WTC11 (cell line): ENCODE measurements at regions of chr5 and their contacts with region 1.

Region 1: DNA sequence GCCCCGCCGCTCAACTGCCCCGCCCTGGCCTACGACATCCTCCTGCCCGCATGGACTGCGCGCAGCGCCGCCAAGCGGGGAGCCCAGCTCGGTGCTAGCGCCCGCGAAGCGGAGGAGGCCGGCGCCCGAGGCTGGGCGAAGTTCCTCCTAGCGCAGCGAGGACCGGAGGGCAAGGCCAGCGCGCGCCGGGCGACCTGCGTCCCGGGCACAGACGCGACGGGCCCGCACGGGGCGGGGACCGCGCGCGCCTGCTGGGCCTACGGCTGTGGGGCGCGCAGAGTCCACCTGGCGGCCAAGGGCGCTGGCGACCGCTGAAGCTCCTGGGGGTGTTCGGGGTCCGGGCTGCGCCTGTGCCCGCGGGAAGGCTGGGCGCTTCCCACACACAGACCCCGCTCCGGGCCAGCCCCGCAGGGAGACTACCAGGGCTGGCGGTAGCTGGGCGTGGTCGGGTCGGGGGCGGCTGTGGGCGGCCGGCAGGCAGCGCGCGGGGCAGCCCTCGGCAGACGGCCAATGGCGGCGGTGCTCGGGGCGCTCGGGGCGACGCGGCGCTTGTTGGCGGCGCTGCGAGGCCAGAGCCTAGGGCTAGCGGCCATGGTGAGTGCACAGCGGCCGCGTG is at the start of gene PCBD2:
- DNase-seq: peak; percentile 96
- ATAC-seq: peak; percentile 90
- H3K4me3 Mint-ChIP-seq: peak within 1 kb of the TSS; percentile 92
- H3K27ac Mint-ChIP-seq: peak within 1 kb of the TSS; percentile 95
- H3K4me1 Mint-ChIP-seq: peaks cover 7% of the 10 kb centered on the region
- H3K27me3 Mint-ChIP-seq: no peaks in the 10 kb centered on the region
- CTCF ChIP-seq: peak; percentile 82
- total RNA-seq, gene PCBD2: 9.9 to 12.8 TPM (median 9.9 TPM) in 3 replicates

Region 2: GRCh38 chr5:134724872-134725271 is 179.9 kb before region 1 on chr5:
- CTCF ChIA-PET with region 1: no interaction called
- POLR2A ChIA-PET with region 1: interaction called, 12 read pairs
- DNase-seq: no peak
- ATAC-seq: no peak
- H3K4me3 Mint-ChIP-seq: no peak overlapping the region
- H3K27ac Mint-ChIP-seq: no peak overlapping the region
- H3K4me1 Mint-ChIP-seq: no peaks in the 10 kb centered on the region
- H3K27me3 Mint-ChIP-seq: no peaks in the 10 kb centered on the region
- CTCF ChIP-seq: no peak

Region 3: DNA sequence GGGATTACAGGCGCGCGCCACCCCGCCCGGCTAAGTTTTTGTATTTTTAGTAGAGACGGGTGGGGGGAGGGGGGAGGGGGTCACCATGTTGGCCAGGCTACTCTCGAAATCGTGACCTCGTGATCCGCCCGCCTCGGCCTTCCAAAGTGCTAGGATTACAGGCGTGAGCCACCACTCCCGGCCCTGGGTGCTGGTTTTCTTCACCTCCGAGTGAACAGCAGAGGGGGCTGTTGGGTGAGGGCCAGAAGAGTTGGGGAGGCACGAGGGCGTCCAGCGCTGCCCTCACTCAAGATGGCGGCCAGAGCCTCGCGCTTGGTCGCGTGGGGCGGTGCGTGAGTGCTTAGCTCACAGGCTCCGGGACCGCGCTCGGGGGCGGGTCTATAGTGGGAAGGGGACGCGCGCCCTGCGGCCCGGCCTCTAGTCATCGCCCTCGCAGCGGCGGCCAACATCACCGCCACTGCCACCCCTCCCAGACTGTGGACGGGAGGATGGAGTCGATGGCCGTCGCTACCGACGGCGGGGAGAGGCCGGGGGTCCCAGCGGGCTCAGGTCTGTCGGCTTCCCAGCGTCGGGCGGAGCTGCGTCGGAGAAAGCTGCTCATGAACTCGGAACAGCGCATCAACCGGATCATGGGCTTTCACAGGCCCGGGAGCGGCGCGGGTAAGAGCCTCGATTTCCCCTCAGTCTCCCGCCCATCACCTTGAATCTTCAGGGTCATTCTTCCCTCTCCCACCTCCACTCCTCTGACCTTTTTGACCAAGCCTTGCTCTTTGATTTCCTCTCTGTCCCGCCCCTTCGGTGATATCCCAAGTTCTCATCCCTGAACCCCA is 166.4 kb before region 1 on chr5 and contains the start of gene CAMLG:
- CTCF ChIA-PET with region 1: interaction called, 30 read pairs
- POLR2A ChIA-PET with region 1: interaction called, 6 read pairs
- DNase-seq: peak; percentile 98
- ATAC-seq: peak; percentile 87
- H3K4me3 Mint-ChIP-seq: peak within 1 kb of the TSS; percentile 95
- H3K27ac Mint-ChIP-seq: peak within 1 kb of the TSS; percentile 95
- H3K4me1 Mint-ChIP-seq: peaks cover 8% of the 10 kb centered on the region
- H3K27me3 Mint-ChIP-seq: no peaks in the 10 kb centered on the region
- CTCF ChIP-seq: peak; percentile 43; the same call in 1 of the 2 replicates
- total RNA-seq, gene CAMLG: 39.7 to 43.9 TPM (median 42.1 TPM) in 3 replicates

Region 4: DNA sequence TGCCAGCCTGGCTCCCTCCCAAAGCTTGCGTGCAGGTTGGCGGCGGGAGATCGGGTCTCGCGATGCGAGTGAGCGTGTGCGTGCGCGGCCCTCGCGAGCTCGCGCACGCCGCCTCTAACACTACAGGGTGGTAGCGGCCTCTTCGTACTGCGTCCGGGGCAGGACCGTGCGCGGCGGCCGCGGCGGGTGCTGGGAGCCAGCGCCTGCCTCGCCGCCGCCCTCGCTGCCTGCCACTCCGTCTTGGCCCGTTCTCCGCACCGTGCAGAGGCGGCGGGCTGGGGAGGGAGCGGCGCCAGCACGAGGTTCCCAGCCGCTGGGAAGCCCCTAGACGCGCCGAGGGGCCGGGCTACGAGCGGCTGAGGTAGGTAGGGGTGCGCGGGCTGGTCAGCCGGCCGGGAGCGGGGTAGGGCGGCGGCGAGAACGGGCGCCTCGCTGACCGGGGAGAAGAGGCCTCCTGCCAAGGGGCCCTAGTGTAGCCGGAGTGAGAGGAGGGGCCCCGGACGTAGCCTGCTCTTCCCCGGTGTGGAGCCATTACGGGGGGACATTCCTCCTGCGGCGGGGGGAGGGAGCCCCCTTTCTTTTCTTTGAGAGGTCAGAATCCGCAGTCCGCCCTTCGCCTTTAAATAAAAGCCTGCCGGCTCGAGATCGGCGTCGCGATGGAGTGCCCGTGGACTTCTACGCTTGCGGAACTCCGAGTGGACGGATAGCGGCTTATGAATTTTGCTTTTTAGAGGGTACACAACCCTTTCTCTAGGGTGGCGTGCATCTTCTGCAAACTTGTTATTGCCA is 58.7 kb before region 1 on chr5 and contains the start of gene C5orf24:
- CTCF ChIA-PET with region 1: interaction called, 14 read pairs
- POLR2A ChIA-PET with region 1: interaction called, 4 read pairs
- DNase-seq: peak; percentile 76
- ATAC-seq: peak; percentile 85
- H3K4me3 Mint-ChIP-seq: peak within 1 kb of the TSS; percentile 87
- H3K27ac Mint-ChIP-seq: peak within 1 kb of the TSS; percentile 65
- H3K4me1 Mint-ChIP-seq: peaks cover 14% of the 10 kb centered on the region
- H3K27me3 Mint-ChIP-seq: no peaks in the 10 kb centered on the region
- CTCF ChIP-seq: no peak
- total RNA-seq, gene C5orf24: 15.7 to 21.2 TPM (median 20.6 TPM) in 3 replicates

Region 5: DNA sequence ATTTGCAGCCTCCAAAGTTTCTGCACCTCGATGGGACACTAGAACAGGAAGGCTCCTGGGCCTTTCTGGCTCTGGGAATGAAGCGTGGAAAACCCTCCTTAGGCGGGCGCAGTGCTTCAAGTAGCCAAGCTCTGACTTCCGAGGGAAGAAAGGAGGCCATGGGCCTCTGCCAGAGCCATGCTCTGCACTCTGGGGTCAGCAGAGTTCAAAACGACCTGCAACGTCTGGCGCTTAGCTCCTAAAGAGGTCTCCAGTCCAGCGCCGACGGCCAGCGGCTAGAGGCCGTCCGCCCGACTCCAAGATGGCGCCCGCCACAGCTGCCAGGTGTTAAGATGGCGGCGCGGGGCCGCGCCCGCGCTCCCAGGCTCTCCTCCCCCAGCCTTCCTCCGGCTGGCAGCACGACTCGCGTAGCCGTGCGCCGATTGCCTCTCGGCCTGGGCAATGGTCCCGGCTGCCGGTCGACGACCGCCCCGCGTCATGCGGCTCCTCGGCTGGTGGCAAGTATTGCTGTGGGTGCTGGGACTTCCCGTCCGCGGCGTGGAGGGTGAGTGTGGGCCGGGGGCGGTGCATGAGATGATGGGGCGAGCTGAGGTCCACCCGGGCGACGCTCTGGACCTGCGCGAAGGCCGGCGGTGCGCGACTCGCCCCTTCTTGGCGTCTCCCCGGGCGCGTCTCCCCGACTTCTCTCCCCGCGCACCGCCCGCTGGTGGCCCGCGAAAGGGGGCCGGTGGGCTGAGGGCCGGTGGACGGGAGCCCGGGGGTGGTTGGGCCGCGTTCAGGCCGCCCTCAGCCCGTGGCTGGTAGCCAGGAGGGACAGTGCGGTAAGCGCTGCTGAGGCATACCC is 30.5 kb before region 1 on chr5 and contains the start of gene TXNDC15:
- CTCF ChIA-PET with region 1: interaction called, 30 read pairs
- POLR2A ChIA-PET with region 1: interaction called, 20 read pairs
- DNase-seq: peak; percentile 87
- ATAC-seq: peak; percentile 89
- H3K4me3 Mint-ChIP-seq: peak within 1 kb of the TSS; percentile 88
- H3K27ac Mint-ChIP-seq: peak within 1 kb of the TSS; percentile 53
- H3K4me1 Mint-ChIP-seq: peaks cover 15% of the 10 kb centered on the region
- H3K27me3 Mint-ChIP-seq: no peaks in the 10 kb centered on the region; the same call in 1 of the 2 replicates
- CTCF ChIP-seq: no peak
- total RNA-seq, gene TXNDC15: 26.1 to 28.7 TPM (median 26.1 TPM) in 3 replicates

Region 6: DNA sequence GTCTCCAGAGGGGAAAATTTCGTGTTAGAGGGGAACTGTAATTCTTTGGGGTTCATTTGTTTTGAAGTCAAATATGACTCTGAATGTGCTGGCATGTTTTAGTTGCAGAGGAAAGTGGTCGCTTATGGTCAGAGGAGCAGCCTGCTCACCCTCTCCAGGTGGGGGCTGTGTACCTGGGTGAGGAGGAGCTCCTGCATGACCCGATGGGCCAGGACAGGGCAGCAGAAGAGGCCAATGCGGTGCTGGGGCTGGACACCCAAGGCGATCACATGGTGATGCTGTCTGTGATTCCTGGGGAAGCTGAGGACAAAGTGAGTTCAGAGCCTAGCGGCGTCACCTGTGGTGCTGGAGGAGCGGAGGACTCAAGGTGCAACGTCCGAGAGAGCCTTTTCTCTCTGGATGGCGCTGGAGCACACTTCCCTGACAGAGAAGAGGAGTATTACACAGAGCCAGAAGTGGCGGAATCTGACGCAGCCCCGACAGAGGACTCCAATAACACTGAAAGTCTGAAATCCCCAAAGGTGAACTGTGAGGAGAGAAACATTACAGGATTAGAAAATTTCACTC is 17.1 kb before region 1 on chr5:
- CTCF ChIA-PET with region 1: interaction called, 10 read pairs
- POLR2A ChIA-PET with region 1: no interaction called
- DNase-seq: no peak
- ATAC-seq: peak; percentile 92
- H3K4me3 Mint-ChIP-seq: no peak overlapping the region
- H3K27ac Mint-ChIP-seq: no peak overlapping the region
- H3K4me1 Mint-ChIP-seq: 0 out of 2 replicates have a peak, but pooled peaks cover 2% of the 10 kb centered on the region
- H3K27me3 Mint-ChIP-seq: no peaks in the 10 kb centered on the region
- CTCF ChIP-seq: no peak

Region 7: GRCh38 chr5:134917070-134917815 is 12.5 kb after region 1 on chr5:
- CTCF ChIA-PET with region 1: interaction called, 17 read pairs
- POLR2A ChIA-PET with region 1: interaction called, 4 read pairs
- DNase-seq: peak; percentile 56
- ATAC-seq: peak; percentile 91
- H3K4me3 Mint-ChIP-seq: no peak overlapping the region
- H3K27ac Mint-ChIP-seq: no peak overlapping the region
- H3K4me1 Mint-ChIP-seq: no peaks in the 10 kb centered on the region
- H3K27me3 Mint-ChIP-seq: no peaks in the 10 kb centered on the region
- CTCF ChIP-seq: peak; percentile 36; the same call in 1 of the 2 replicates

Region 8: DNA sequence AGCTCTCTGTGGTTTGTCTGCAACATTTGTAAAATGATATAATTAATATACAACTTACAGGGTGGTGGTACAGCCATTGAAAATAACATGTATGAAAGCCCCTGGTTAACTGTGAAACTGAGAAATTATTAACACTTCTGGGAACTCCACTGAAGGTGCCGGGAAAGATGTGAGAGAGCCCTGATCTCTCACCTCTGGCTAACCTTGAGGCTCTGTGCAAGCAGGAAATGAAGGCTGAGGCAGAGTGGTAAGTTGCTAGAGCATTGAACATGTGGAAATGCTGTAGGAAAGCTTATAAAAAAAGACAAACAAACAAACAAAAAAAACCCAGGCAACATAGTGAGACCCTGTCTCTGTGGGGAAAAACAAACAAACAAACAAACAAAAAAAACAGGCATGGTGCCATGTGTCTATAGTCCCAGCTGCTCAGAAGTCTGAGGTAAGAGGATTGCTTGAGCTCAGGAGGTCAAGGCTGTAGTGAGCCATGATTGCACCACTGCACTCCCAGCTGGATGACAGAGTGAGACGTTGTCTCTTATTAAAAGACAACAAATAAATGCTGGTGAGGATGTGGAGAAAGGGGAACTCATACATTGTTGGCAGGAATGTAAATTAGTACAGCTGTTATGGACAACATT is 70.5 kb after region 1 on chr5:
- CTCF ChIA-PET with region 1: no interaction called
- POLR2A ChIA-PET with region 1: no interaction called
- DNase-seq: no peak
- ATAC-seq: no peak
- H3K4me3 Mint-ChIP-seq: no peak overlapping the region
- H3K27ac Mint-ChIP-seq: no peak overlapping the region
- H3K4me1 Mint-ChIP-seq: no peaks in the 10 kb centered on the region
- H3K27me3 Mint-ChIP-seq: peaks cover 14% of the 10 kb centered on the region
- CTCF ChIP-seq: no peak